Body of pancreas (tissue), 4 donors: ENCODE measurements at regions of chr3 and their contacts with region 1.

Region 1: GRCh38 chr3:127544192-127544802 is 46.2 kb downstream of the TPRA1 start:
- DNase-seq: peak; percentile 77 to 83 (median 80)
- ATAC-seq: peak; percentile 49
- H3K4me3 ChIP-seq: no peak overlapping the region
- H3K27ac ChIP-seq: peak overlapping the region in 1 of 4 donors; percentile 11
- H3K4me1 ChIP-seq: peaks cover 18% of the 10 kb centered on the region
- H3K27me3 ChIP-seq: no peaks in the 10 kb centered on the region
- CTCF ChIP-seq: peak; percentile 63 to 82 (median 68)
- POLR2A ChIP-seq: no peak

Region 2: GRCh38 chr3:126679318-126679751 is 865.0 kb before region 1 on chr3:
- intact Hi-C with region 1: loop called (anchors 10 kb)
- DNase-seq: peak; percentile 80 to 90 (median 82)
- ATAC-seq: peak; percentile 83
- H3K4me3 ChIP-seq: no peak overlapping the region
- H3K27ac ChIP-seq: no peak overlapping the region
- H3K4me1 ChIP-seq: no peaks in the 10 kb centered on the region
- H3K27me3 ChIP-seq: no peaks in the 10 kb centered on the region
- CTCF ChIP-seq: peak; percentile 80 to 97 (median 87)
- POLR2A ChIP-seq: no peak